Aorta (tissue), 5 donors: ENCODE measurements at regions of chr11 and their contacts with region 1.

Region 1: DNA sequence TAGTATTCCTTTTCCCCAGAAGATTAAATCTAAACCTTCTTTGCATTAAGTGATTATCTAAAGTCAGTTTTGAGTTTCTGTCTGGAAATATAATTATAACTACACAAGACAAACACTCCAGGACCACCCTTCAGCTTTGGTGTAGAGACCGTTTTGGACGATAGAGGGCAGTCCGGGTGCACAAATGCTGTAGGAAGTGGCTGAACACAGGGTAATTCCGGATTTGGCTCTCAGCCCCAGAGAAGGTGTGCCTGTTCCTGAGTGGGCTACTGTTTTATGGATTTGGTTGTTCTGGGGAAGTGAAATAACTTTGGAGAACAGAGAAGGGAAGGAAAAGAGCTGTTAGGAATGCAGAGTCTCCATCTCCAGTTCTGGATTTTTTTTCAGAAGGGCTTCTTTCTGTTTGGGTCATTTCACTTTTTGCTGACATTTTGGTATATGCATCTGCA is 14.8 kb downstream of the EXT2 start:
- DNase-seq: peak in 1 of 2 donors; percentile 56
- ATAC-seq: peak; percentile 74
- H3K4me3 ChIP-seq: no peak overlapping the region
- H3K27ac ChIP-seq: no peak overlapping the region
- H3K4me1 ChIP-seq: no peaks in the 10 kb centered on the region
- H3K27me3 ChIP-seq: no peaks in the 10 kb centered on the region

Region 2: DNA sequence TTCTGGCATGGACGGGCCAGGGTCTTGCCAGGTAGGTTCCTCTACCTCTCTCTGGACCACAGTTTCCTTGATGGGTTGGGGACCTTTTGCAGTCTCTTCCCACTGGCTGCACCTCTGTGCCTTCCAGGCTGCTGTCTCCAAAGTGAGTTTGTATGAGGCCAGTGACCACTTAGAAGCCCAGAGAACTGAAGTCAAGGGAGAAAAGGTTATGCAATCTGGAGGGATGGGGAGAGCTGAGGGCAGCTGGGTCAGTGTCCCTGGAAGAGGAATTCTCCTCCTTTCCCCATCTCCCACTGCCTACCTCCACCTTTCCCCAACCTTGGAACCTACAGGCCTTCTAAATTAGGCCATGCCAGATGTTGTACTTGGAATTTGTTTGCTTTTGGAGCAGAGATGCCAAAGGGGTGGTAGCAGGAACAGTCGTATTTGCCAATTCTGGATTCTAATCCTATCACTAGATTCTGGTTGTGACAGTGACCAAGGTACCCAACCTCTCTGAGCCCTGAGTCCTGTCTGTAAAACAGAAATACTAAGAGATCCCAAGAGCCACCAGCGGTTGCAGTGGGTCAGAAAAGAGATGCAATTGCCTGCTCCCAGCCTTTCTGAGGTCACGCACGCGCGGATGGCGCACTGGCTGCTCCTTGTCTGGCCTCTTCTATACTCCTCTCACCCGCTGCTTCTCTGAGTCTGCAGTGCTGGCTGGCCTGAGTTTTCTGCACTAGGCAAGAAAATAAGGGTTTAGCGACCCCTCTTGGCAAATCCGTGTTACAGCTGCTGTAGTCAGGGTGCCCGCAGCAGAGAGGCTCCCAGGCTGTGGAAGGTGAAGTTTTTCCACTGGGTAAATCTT is 73.2 kb before region 1 on chr11:
- intact Hi-C with region 1: no loop called
- DNase-seq: peak; percentile 91 to 93
- ATAC-seq: peak; percentile 95
- H3K4me3 ChIP-seq: no peak overlapping the region
- H3K27ac ChIP-seq: peak overlapping the region in 1 of 2 donors; percentile 54
- H3K4me1 ChIP-seq: peaks cover 5 to 6% of the 10 kb centered on the region in 2 donors
- H3K27me3 ChIP-seq: no peaks in the 10 kb centered on the region

Region 3: GRCh38 chr11:44286268-44286880 is 176.1 kb after region 1 on chr11:
- intact Hi-C with region 1: loop called in 1 of 2 experiments (anchors 5 kb)
- DNase-seq: peak in 1 of 2 donors; percentile 86
- ATAC-seq: peak; percentile 76
- H3K4me3 ChIP-seq: no peak overlapping the region
- H3K27ac ChIP-seq: no peak overlapping the region
- H3K4me1 ChIP-seq: no peaks in the 10 kb centered on the region
- H3K27me3 ChIP-seq: no peaks in the 10 kb centered on the region